ENCODE measurements at regions of chr5 and their contacts with region 1.

Region 1: GRCh38 chr5:119267958-119268386 is 87.8 kb upstream of the TNFAIP8 start:
- DNase-seq: peak; percentile 97
- ATAC-seq: peak; percentile 80
- H3K4me3 Mint-ChIP-seq: peak overlapping the region; percentile 95
- H3K27ac Mint-ChIP-seq: peak overlapping the region; percentile 96
- H3K4me1 Mint-ChIP-seq: peaks cover 65% of the 10 kb centered on the region
- H3K27me3 Mint-ChIP-seq: no peaks in the 10 kb centered on the region
- CTCF ChIP-seq: peak; percentile 91

Region 2: DNA sequence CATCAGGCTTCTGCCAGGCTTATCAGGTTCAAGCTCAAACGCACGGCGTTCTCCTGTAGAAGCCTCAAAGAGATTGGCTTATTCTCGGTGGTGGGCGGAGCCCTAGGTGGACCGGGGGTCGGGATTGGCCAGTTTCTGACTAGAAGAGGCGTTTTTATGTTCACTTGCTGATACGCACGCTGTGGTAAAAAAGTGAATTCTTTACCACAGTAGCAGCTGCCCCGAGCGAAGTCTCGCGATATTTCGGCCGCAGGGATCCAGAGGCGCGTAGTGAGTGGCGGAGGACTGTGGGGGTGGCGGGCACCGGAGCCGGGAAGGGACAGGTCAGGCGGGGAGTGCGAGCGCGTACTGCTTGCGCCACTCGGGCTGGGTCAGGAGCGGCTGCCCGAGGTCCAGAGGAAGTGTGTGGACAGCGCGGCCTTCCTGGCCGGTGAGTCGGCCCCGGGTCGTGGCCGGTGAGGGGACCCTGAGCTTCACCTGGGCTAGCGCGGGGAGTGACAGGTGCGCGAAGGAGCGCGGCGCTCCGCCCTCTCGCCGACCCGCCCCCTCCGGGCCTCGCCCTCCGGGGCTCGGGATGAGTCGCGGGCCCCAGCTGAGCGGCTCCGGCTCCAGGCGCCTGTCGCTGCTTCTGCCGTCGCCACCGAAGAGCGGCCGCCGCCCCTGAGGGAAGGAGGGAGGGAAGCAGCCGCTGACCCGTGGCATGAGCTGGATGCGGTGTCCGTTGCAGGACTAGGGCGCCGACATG is 197.0 kb before region 1 on chr5 and contains the start of gene DMXL1:
- CTCF ChIA-PET with region 1: interaction called, 10 read pairs
- POLR2A ChIA-PET with region 1: interaction called, 5 read pairs
- intact Hi-C with region 1: loop called (anchors 5 kb)
- DNase-seq: peak; percentile 99
- ATAC-seq: peak; percentile 87
- H3K4me3 Mint-ChIP-seq: peak within 1 kb of the TSS; percentile 85
- H3K27ac Mint-ChIP-seq: peak within 1 kb of the TSS; percentile 99
- H3K4me1 Mint-ChIP-seq: peaks cover 26% of the 10 kb centered on the region
- H3K27me3 Mint-ChIP-seq: peaks cover 1% of the 10 kb centered on the region
- CTCF ChIP-seq: no peak
- total RNA-seq, gene DMXL1: 20.8 to 23.3 TPM

Region 3: GRCh38 chr5:119255571-119256356 is 12.2 kb before region 1 on chr5:
- CTCF ChIA-PET with region 1: interaction called, 15 read pairs
- POLR2A ChIA-PET with region 1: interaction called, 6 read pairs
- intact Hi-C with region 1: no loop called
- DNase-seq: peak; percentile 30
- ATAC-seq: peak; percentile 83
- H3K4me3 Mint-ChIP-seq: no peak overlapping the region
- H3K27ac Mint-ChIP-seq: no peak overlapping the region
- H3K4me1 Mint-ChIP-seq: peaks cover 14% of the 10 kb centered on the region
- H3K27me3 Mint-ChIP-seq: no peaks in the 10 kb centered on the region
- CTCF ChIP-seq: peak; percentile 19

Region 4: GRCh38 chr5:119290161-119290569 is 22.2 kb after region 1 on chr5:
- CTCF ChIA-PET with region 1: interaction called, 13 read pairs
- POLR2A ChIA-PET with region 1: interaction called, 5 read pairs
- intact Hi-C with region 1: no loop called
- DNase-seq: peak; percentile 26
- ATAC-seq: peak; percentile 59
- H3K4me3 Mint-ChIP-seq: peak overlapping the region; percentile 22
- H3K27ac Mint-ChIP-seq: peak overlapping the region; percentile 93
- H3K4me1 Mint-ChIP-seq: peaks cover 85% of the 10 kb centered on the region
- H3K27me3 Mint-ChIP-seq: no peaks in the 10 kb centered on the region
- CTCF ChIP-seq: no peak

Region 5: DNA sequence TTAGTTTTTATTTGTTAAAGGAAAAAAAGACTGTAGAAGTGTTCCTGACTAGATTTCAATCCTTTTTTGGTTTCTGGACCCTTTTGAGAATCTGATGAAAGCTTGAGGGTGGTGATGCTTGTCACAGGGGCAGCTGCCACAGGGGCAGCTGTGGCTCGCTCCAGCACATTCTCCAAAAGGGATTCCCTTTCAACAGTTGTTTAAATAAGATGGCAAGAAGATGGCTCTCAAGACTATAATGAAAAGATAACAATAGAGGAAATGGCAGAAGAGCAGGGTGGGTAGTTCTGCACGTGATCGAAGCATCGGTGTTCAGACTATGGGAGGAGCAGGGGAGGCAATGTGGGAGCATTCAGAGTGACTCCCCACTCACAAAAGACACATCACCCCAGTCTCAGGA is 41.4 kb after region 1 on chr5:
- CTCF ChIA-PET with region 1: interaction called, 6 read pairs
- POLR2A ChIA-PET with region 1: interaction called, 6 read pairs
- intact Hi-C with region 1: loop called (anchors 2 kb)
- DNase-seq: peak; percentile 27
- ATAC-seq: peak; percentile 4
- H3K4me3 Mint-ChIP-seq: peak overlapping the region; percentile 76
- H3K27ac Mint-ChIP-seq: peak overlapping the region; percentile 98
- H3K4me1 Mint-ChIP-seq: peaks cover 94% of the 10 kb centered on the region
- H3K27me3 Mint-ChIP-seq: no peaks in the 10 kb centered on the region
- CTCF ChIP-seq: no peak

Region 6: DNA sequence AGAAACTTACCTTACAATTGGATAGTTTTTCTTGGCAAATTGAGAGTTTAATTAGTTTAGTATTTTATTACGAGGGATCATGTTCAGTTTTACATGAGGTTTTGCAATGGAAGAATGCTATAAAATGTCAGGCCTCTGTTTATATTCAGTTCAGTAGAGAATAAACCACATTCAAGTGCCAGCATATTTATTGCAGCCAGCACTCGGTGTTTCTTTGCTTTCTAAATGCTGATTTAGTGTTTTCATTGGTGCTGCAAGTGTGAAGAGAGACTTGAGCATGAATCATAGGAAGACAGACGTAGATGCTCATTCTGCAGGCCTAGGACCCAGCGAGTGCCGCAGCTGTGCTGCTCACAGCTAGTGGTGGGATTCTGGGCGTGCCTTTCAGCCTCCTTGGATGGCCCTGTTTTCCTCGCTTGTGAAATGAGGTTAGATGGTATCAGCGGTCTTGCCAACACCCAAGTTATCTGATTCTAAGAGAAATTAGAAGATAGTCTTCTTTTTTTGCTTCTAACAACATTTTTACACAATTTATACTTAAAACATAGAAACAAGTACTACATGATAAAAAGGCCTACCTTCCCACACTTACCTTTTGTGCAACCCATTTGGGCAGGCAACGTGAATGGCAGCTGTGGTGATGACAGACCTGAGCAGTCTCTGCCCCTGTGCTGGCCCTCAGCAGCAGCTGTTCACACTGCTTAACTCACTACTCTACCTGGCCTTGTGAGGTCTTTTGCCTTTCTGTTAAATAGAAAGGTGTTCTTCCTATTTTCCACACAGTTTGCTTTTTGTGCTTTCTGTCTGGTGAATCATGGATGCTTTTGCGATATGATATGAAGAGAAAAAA is 61.0 kb after region 1 on chr5:
- CTCF ChIA-PET with region 1: interaction called, 8 read pairs
- POLR2A ChIA-PET with region 1: interaction called, 16 read pairs
- intact Hi-C with region 1: no loop called
- DNase-seq: peak; percentile 80
- ATAC-seq: peak; percentile 73
- H3K4me3 Mint-ChIP-seq: peak overlapping the region; percentile 43
- H3K27ac Mint-ChIP-seq: peak overlapping the region; percentile 95
- H3K4me1 Mint-ChIP-seq: peaks cover 92% of the 10 kb centered on the region
- H3K27me3 Mint-ChIP-seq: no peaks in the 10 kb centered on the region
- CTCF ChIP-seq: no peak